Activated naive CD4-positive, alpha-beta T cell treated with anti-CD3 and anti-CD28 coated beads for 36 hours (primary cell): ENCODE measurements at regions of chr4 and their contacts with region 1.

Region 1: DNA sequence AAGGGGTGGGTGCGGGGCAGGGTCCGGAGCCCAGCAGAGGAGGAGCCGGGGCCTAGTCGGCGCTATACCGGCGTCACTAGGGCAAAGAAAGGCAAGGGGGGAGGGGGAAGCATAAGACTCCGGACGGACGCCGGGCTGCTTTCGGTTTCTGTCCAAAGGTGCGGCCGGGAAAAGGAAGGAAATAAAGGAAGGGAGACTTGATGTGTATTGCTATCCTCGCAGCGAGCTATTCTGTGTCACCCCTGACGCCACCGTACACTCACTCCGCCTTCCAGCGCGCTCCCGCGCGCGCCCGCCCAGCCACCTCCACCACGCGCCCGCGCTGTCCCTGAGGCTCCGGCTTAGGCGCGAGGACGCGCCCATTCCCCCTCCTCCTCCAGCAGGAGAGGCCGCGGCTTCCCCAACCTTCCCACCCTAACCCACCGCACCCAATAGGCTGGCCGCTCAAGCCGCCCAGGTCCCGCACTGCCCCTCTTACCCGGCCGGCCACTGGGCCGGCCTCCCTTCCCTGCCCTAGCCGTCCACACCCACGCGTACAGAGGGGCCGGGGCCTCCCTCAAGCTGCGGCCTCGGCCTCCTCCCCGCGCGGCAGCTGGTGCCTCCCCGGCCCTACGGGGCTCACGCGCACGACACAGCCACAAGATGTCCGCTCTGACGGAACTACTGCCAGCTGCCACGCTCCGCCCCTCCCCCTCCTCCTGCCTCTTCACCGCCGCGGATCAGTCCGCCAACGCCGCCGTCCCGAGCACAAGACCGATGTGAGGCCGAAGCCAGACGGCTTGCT is at the start of gene UBE2D3:
- DNase-seq: peak; percentile 95
- H3K4me3 Mint-ChIP-seq: no peak within 1 kb of the TSS
- H3K27ac Mint-ChIP-seq: no peak within 1 kb of the TSS
- H3K4me1 Mint-ChIP-seq: peaks cover 27% of the 10 kb centered on the region
- H3K27me3 Mint-ChIP-seq: no peaks in the 10 kb centered on the region
- total RNA-seq, gene UBE2D3: 447 to 450 TPM

Region 2: GRCh38 chr4:102390438-102390837 is 436.6 kb before region 1 on chr4:
- CTCF ChIA-PET with region 1: no interaction called
- intact Hi-C with region 1: loop called (anchors 1 kb)
- DNase-seq: no peak
- H3K4me3 Mint-ChIP-seq: no peak overlapping the region
- H3K27ac Mint-ChIP-seq: no peak overlapping the region
- H3K4me1 Mint-ChIP-seq: peaks cover 17% of the 10 kb centered on the region
- H3K27me3 Mint-ChIP-seq: peaks cover 4% of the 10 kb centered on the region

Region 3: DNA sequence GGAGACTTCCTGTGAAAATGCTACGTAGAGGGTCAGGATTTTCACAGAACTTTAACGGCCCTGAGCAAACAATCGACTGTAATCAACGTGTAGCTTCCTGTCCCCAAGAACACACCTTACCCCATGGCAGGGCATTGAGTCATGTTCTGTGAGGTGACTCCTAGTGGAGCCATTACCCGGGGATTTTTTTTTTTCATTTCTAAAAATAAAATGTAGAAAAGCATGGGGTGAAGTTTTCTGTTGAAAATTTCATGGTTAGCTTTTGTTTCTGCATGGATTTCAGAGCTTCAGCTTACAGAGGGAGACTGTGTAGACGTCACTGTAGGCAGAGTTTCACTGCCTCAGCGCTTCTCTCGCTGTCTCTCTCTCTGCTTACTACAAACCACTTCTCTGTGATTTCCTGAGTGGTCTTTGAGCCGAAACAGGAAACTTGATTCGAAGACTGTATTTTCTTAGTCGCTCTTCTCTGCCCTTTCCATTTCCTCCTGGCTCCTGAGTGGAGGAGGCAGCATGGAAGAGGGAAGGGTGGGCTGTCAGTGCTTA is 214.2 kb before region 1 on chr4:
- CTCF ChIA-PET with region 1: no interaction called
- intact Hi-C with region 1: loop called (anchors 1 kb)
- DNase-seq: peak; percentile 75
- H3K4me3 Mint-ChIP-seq: peak overlapping the region; percentile 48
- H3K27ac Mint-ChIP-seq: peak overlapping the region; percentile 89
- H3K4me1 Mint-ChIP-seq: peaks cover 78% of the 10 kb centered on the region
- H3K27me3 Mint-ChIP-seq: no peaks in the 10 kb centered on the region

Region 4: GRCh38 chr4:102696758-102697157 is 130.3 kb before region 1 on chr4:
- CTCF ChIA-PET with region 1: no interaction called
- intact Hi-C with region 1: no loop called
- DNase-seq: no peak
- H3K4me3 Mint-ChIP-seq: no peak overlapping the region
- H3K27ac Mint-ChIP-seq: no peak overlapping the region
- H3K4me1 Mint-ChIP-seq: no peaks in the 10 kb centered on the region
- H3K27me3 Mint-ChIP-seq: no peaks in the 10 kb centered on the region

Region 5: DNA sequence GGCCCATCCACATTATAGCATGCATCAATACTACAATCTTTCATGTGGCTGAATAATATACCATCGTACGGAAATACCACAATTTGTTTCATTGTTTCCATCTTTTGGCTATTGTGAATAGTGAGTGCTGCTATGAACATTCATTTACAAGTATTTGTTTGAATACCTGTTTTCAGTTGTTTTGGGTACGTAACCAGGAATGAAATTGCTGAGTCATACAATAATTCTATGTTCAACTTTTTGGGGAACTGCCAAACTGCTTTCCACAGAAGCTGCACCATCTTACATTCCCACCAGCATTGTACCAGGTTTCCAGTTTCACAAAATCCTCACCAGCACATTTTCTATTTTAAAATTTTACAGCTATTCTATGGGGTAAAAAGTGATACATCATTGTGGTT is 37.8 kb before region 1 on chr4:
- CTCF ChIA-PET with region 1: no interaction called
- intact Hi-C with region 1: loop called (anchors 2 kb)
- DNase-seq: no peak
- H3K4me3 Mint-ChIP-seq: no peak overlapping the region
- H3K27ac Mint-ChIP-seq: peak overlapping the region; percentile 2
- H3K4me1 Mint-ChIP-seq: peaks cover 26% of the 10 kb centered on the region
- H3K27me3 Mint-ChIP-seq: no peaks in the 10 kb centered on the region

Region 6: DNA sequence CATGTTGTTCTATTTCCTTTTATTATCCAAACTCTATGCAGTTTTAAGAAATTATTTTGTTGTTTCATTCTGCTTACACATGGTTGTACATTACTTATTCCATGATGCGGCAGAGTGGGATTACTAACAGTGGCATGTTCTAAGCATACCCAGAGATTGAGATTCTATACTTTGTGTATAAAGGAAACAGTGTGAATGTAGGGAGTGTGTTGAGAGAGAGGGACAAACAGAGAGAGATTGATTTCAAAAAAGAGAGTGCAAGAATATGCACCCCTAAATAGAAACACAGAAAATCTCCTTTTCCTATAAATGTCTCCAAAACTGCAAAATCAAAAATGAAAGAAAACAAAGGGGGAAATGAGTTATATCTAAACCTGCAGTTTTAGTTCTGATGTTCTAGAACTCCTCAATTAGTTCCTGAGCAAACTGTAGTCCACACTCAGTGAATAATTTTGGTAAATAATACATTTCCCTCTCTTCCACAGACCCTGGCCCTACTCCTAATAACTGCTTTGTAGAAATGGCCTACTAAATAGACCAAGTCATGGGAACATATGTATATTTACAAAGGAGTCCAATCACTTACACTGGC is 161.4 kb after region 1 on chr4:
- CTCF ChIA-PET with region 1: no interaction called
- intact Hi-C with region 1: loop called (anchors 2 kb)
- DNase-seq: no peak
- H3K4me3 Mint-ChIP-seq: peak overlapping the region; percentile 4
- H3K27ac Mint-ChIP-seq: peak overlapping the region; percentile 65
- H3K4me1 Mint-ChIP-seq: peaks cover 21% of the 10 kb centered on the region
- H3K27me3 Mint-ChIP-seq: no peaks in the 10 kb centered on the region

Region 7: GRCh38 chr4:103075901-103076739 is 249.0 kb after region 1 on chr4:
- CTCF ChIA-PET with region 1: no interaction called
- intact Hi-C with region 1: loop called (anchors 1 kb)
- DNase-seq: peak; percentile 62
- H3K4me3 Mint-ChIP-seq: peak overlapping the region; percentile 82
- H3K27ac Mint-ChIP-seq: peak overlapping the region; percentile 98
- H3K4me1 Mint-ChIP-seq: peaks cover 47% of the 10 kb centered on the region
- H3K27me3 Mint-ChIP-seq: no peaks in the 10 kb centered on the region